PC-3 (cell line): ENCODE measurements at regions of chr17 and their contacts with region 1.

Region 1: DNA sequence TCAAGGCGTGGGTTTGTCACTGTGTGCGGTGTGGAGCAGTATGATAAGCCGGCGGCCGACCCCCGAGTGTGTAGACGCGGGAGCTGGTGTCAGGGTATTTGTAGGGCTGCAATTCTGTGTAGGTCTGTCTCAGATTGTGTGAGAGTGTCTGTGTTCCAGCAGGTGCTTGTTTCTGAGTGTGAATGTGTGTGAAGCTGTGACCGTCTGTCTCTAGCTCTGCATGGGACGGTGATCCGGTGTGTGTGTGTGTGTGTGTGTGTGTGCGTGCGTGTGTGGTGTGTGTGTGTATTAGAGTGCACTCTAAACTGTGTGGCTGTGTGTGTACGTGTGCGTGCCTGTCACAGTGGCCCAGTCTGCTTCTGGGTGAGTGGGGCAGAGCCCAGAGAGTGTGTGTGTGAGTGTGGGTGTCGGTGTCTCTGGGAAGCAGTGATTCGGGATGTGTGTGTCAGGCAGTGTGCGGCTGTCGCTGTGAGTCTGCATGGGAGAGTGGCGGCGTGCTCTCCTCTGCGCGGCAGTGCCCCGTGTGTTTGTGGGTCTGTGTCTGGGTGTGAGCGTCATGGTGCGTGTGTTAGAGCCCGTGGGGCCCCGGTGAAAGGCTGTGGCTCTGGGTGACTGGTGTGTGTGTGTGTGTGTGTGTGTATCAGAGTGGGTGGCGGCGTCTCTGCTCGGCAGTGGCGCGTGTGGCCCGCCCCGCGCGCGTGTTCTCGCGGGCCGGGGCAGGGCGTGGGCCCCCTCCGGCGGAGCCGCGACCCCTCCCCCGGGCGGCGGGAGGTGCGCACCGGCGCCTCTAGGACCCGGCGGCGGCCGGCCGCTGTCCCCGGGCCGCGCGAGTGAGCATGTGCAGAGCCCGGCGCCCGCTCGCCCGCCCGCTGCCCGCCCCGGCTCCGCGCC is at the start of gene WSCD1:
- DNase-seq: peak; percentile 41
- ATAC-seq: peak; percentile 52
- H3K4me3 ChIP-seq: peak within 1 kb of the TSS; percentile 79
- H3K27ac ChIP-seq: peak within 1 kb of the TSS; percentile 56
- H3K4me1 ChIP-seq: peaks cover 31% of the 10 kb centered on the region
- H3K27me3 ChIP-seq: no peaks in the 10 kb centered on the region
- CTCF ChIP-seq: no peak
- total RNA-seq, gene WSCD1: 56.7 and 57.0 TPM in 2 replicates

Region 2: GRCh38 chr17:5592382-5592781 is 477.4 kb before region 1 on chr17:
- CTCF ChIA-PET with region 1: interaction called, 6 read pairs
- POLR2A ChIA-PET with region 1: no interaction called
- intact Hi-C with region 1: loop called (anchors 10 kb)
- DNase-seq: peak; percentile 79
- ATAC-seq: 0 out of 2 replicates have a peak, but pooled peaks have one; percentile 35
- H3K4me3 ChIP-seq: no peak overlapping the region
- H3K27ac ChIP-seq: no peak overlapping the region
- H3K4me1 ChIP-seq: 0 out of 2 replicates have a peak, but pooled peaks cover under 1% of the 10 kb centered on the region
- H3K27me3 ChIP-seq: no peaks in the 10 kb centered on the region
- CTCF ChIP-seq: peak; percentile 70

Region 3: GRCh38 chr17:5785867-5786509 is 283.8 kb before region 1 on chr17:
- CTCF ChIA-PET with region 1: no interaction called
- POLR2A ChIA-PET with region 1: interaction called, 3 read pairs
- intact Hi-C with region 1: loop called (anchors 10 kb)
- DNase-seq: peak; percentile 60
- ATAC-seq: peak; percentile 4; the same call in 1 of the 2 replicates
- H3K4me3 ChIP-seq: no peak overlapping the region
- H3K27ac ChIP-seq: peak overlapping the region; percentile 99
- H3K4me1 ChIP-seq: peaks cover 51% of the 10 kb centered on the region
- H3K27me3 ChIP-seq: no peaks in the 10 kb centered on the region
- CTCF ChIP-seq: no peak

Region 4: DNA sequence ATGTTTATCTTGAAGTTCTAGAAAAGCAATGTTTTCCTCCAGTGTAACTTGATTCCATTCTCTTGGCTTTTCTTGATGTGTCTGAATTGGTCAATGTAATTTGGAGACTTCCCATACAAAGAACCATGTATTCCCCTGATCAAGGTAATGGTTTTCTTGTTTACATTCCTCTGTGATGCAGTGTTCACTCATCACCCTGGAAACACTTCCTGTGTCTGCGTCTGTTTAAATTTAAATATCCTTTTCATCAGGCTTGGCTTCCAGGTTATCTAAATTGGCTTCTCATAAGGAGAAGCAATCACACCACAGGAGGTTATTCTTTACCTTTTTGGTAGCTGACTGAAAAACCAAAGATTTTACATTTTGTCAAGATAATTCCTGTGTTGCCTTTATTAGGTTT is 236.9 kb before region 1 on chr17:
- CTCF ChIA-PET with region 1: no interaction called
- POLR2A ChIA-PET with region 1: no interaction called
- intact Hi-C with region 1: loop called (anchors 5 kb)
- DNase-seq: peak; percentile 83
- ATAC-seq: peak; percentile 72
- H3K4me3 ChIP-seq: no peak overlapping the region
- H3K27ac ChIP-seq: peak overlapping the region; percentile 98
- H3K4me1 ChIP-seq: peaks cover 79% of the 10 kb centered on the region
- H3K27me3 ChIP-seq: no peaks in the 10 kb centered on the region
- CTCF ChIP-seq: no peak

Region 5: GRCh38 chr17:6018788-6019187 is 51.0 kb before region 1 on chr17:
- CTCF ChIA-PET with region 1: no interaction called
- POLR2A ChIA-PET with region 1: no interaction called
- intact Hi-C with region 1: no loop called
- DNase-seq: no peak
- ATAC-seq: no peak
- H3K4me3 ChIP-seq: no peak overlapping the region
- H3K27ac ChIP-seq: no peak overlapping the region
- H3K4me1 ChIP-seq: no peaks in the 10 kb centered on the region
- H3K27me3 ChIP-seq: no peaks in the 10 kb centered on the region
- CTCF ChIP-seq: no peak

Region 6: DNA sequence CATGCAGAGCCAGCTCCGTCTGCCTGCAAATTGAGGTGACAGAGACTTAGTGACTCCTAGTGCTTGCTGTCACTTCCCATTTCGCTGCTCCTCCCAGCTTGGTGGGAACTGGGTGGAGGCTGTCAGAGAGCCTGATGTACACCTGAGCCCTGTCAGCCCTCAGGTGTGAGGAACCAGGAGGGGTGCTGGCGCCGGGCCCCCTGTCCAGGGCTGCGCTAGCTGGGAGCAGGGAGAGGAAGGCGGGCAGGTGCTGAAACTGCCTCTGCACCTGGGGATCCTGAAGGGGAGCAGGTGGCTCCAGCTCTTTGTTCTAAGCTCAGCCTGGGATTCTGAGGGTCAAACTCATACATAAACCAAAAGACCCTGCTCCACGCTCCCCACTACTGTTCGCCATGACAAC is 10.4 kb before region 1 on chr17:
- CTCF ChIA-PET with region 1: no interaction called
- POLR2A ChIA-PET with region 1: no interaction called
- intact Hi-C with region 1: no loop called
- DNase-seq: no peak
- ATAC-seq: no peak
- H3K4me3 ChIP-seq: no peak overlapping the region
- H3K27ac ChIP-seq: no peak overlapping the region
- H3K4me1 ChIP-seq: peaks cover 9% of the 10 kb centered on the region
- H3K27me3 ChIP-seq: no peaks in the 10 kb centered on the region
- CTCF ChIP-seq: no peak

Region 7: GRCh38 chr17:6092182-6092902 is 22.6 kb after region 1 on chr17:
- CTCF ChIA-PET with region 1: no interaction called
- POLR2A ChIA-PET with region 1: no interaction called
- intact Hi-C with region 1: no loop called
- DNase-seq: no peak
- ATAC-seq: no peak
- H3K4me3 ChIP-seq: no peak overlapping the region
- H3K27ac ChIP-seq: no peak overlapping the region
- H3K4me1 ChIP-seq: no peaks in the 10 kb centered on the region
- H3K27me3 ChIP-seq: no peaks in the 10 kb centered on the region
- CTCF ChIP-seq: no peak

Region 8: GRCh38 chr17:6239241-6239798 is 169.5 kb after region 1 on chr17:
- CTCF ChIA-PET with region 1: no interaction called
- POLR2A ChIA-PET with region 1: no interaction called
- intact Hi-C with region 1: loop called (anchors 1 kb)
- DNase-seq: peak; percentile 88
- ATAC-seq: peak; percentile 89
- H3K4me3 ChIP-seq: no peak overlapping the region; the same call in 1 of the 2 replicates
- H3K27ac ChIP-seq: peak overlapping the region; percentile 92
- H3K4me1 ChIP-seq: peaks cover 47% of the 10 kb centered on the region
- H3K27me3 ChIP-seq: no peaks in the 10 kb centered on the region
- CTCF ChIP-seq: no peak